Cardiac septum (tissue), 1 donor: ENCODE measurements at regions of chr6 and their contacts with region 1.

Region 1: GRCh38 chr6:30396833-30397479 is 52.0 kb downstream of the RPP21 start:
- DNase-seq: peak; percentile 91

Region 2: DNA sequence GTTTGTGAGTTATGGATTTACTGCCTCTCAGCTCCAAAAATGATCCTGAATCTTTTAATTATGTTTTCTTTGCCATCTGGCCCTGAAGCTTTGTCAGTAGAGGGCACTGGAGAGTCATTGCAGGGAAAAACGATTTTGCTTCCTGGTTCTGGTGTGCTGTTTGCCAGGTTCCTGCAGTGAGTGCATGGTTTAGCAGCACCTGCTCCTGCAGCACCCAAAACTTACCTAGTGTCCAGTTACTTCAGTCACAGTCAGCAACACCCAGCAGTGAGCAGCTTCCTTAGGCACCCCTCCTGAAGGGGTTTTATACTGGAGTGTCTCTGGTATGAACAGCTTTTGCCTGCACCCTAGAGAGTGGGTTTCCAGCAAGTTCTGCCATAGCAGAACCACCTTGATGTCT is 177.7 kb before region 1 on chr6:
- intact Hi-C with region 1: loop called (anchors 5 kb)
- DNase-seq: no peak

Region 3: GRCh38 chr6:30357678-30358540 is 39.0 kb before region 1 on chr6:
- intact Hi-C with region 1: loop called (anchors 5 kb)
- DNase-seq: no peak